ENCODE measurements at regions of chr9 and their contacts with region 1.

Region 1: DNA sequence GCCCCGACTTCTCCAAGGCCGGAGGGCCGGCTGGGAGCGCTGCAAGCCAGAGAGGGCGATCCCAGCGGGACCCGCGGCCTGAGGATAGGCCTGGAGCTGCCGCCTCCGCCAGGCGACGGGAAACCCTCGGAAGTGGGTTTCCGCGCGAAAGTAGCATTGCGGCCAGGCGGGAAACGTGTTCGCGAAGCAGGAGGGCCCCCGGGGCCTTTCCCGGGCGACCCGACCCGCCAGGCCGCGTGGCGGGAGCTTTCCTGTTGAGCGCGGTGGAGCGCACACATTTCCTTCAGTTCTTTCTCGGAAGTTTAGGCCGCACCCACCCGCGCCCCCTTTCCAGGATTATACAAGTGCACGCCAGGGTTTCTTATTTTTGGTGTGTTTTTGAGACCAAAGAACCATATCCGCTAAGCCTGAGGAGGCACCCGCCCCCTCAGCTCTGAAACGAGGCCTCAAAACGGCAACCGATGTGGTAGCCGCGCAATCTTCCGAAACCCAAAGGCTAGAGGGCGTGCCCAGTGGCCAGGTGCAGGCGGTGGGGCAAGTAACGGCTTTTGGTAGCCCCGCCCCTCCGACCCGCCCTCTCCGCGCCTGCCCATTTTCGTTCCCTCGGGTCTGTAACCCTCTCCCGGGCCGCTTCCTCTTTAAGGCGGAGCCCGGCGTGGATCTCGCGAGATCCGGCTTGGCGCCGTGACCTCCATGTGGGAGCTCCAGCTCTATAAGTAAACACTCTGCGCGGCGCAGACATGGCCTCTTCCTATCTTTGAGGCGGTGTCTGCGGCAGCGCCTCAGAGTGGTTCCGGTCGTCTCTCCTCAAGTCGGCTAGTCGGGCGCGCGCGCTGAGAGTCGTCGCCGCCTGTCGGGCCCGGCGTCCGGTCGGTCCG is at the start of gene UHRF2:
- DNase-seq: peak; percentile 98
- H3K4me3 ChIP-seq: peak within 1 kb of the TSS; percentile 95 to 96
- H3K27ac ChIP-seq: peak within 1 kb of the TSS; percentile 73 to 77
- H3K4me1 ChIP-seq: peaks cover 8% of the 10 kb centered on the region in 2 experiments; a peak in 3 of 4 replicates
- H3K27me3 ChIP-seq: no peaks in the 10 kb centered on the region
- CTCF ChIP-seq: peak; percentile 12; the same call in 1 of the 2 replicates
- EP300 ChIP-seq: no peak
- RAD21 ChIP-seq: no peak
- polyA plus RNA-seq, gene UHRF2: 24.1 and 39.6 TPM in 2 replicates

Region 2: GRCh38 chr9:6426117-6426516 is 13.4 kb after region 1 on chr9:
- CTCF ChIA-PET with region 1: interaction called, 10 read pairs
- POLR2A ChIA-PET with region 1: interaction called, 6 read pairs
- DNase-seq: no peak
- H3K4me3 ChIP-seq: no peak overlapping the region
- H3K27ac ChIP-seq: peak overlapping the region in 1 of 2 experiments; percentile 38; a peak in 1 of 4 replicates
- H3K4me1 ChIP-seq: peaks cover 0 to 13% of the 10 kb centered on the region in 2 experiments; a peak in 1 of 4 replicates
- H3K27me3 ChIP-seq: no peaks in the 10 kb centered on the region
- CTCF ChIP-seq: no peak
- EP300 ChIP-seq: no peak
- RAD21 ChIP-seq: no peak

Region 3: DNA sequence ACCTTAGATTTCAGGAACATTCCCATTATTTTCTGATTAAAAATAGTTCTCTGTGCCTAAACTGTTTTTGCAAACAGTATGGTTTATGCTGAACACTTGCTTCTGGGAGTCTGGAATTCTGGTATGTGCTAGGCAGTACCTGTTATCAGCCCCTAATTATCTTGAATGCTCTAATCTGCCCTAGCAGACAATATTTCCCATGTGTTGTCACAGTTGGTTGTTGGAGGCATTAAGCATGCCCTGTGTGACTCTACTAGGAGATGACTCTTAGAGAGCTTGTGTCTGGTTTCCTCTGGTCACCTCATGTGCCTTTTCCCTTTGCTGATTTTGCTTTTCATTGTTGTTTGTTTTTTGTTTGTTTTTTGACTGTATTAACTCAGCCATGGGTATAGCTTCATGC is 36.9 kb after region 1 on chr9:
- CTCF ChIA-PET with region 1: no interaction called
- POLR2A ChIA-PET with region 1: no interaction called
- DNase-seq: peak; percentile 36
- H3K4me3 ChIP-seq: no peak overlapping the region
- H3K27ac ChIP-seq: peak overlapping the region in 1 of 2 experiments; percentile 45; a peak in 2 of 4 replicates
- H3K4me1 ChIP-seq: peaks cover 0 to 13% of the 10 kb centered on the region in 2 experiments; a peak in 2 of 4 replicates
- H3K27me3 ChIP-seq: no peaks in the 10 kb centered on the region
- CTCF ChIP-seq: no peak
- EP300 ChIP-seq: 0 out of 4 replicates have a peak, but pooled peaks of 1 of the 2 experiments have one; percentile 28
- RAD21 ChIP-seq: no peak

Measured in SK-N-SH (cell line).